Activated CD8-positive, alpha-beta memory T cell treated with anti-CD3 and anti-CD28 coated beads, Interleukin-2, amount 10 ng/mL, durations not matched to agents 7 days and 5 days (primary cell): ENCODE measurements at regions of chr2 and their contacts with region 1.

Region 1: GRCh38 chr2:11477994-11478393 is 12.0 kb upstream of the E2F6 start:
- DNase-seq: peak; percentile 89
- ATAC-seq: peak; percentile 78
- H3K4me3 Mint-ChIP-seq: no peak overlapping the region
- H3K27ac Mint-ChIP-seq: no peak overlapping the region
- H3K4me1 Mint-ChIP-seq: peaks cover under 1% of the 10 kb centered on the region
- H3K27me3 Mint-ChIP-seq: peaks cover 27% of the 10 kb centered on the region

Region 2: DNA sequence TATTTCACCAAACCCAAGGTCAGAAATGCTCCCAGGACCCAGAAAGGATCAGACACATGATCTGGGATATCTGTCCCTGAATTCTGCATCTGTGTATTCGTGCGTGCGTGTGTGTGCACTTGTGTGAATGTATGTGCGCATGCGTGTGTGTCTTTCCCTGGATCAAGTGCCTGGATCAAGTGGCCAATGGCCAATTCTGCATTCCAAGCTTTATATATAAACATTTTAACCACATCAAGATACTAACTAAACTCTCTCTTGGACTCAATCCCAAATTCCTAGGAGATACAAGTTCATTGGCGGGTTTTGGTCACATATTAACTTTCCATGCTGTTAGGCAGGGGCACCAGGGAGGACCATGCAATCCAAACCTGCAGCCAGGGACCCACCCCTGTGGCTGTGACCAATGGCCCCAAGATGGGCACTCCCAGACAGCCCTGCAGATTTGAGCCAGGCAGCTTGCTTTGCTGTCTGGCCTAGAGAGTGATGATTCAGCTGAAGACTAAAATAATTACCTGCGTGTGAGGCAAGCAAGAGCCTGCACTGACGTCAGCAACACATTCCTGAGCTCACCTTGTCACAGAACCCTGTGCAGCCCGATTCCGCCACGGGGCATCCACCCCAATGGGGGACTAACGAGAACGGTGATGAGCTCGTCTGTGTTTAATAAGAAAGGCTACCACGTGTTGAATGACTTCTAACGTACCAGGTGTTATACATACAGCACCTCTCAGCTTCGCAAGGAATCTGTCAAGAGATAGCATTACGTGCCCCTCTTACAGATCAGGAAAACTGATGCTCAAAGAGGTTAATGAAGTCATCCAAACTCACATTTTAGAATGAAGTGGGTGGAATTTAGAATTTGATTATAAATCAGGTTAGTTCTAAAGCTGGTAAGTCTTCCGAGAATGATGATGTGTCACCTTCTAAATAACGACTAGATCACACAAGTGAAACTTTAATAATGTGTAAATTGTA is 88.2 kb before region 1 on chr2:
- CTCF ChIA-PET with region 1: no interaction called
- DNase-seq: no peak
- ATAC-seq: no peak
- H3K4me3 Mint-ChIP-seq: no peak overlapping the region
- H3K27ac Mint-ChIP-seq: no peak overlapping the region
- H3K4me1 Mint-ChIP-seq: no peaks in the 10 kb centered on the region
- H3K27me3 Mint-ChIP-seq: no peaks in the 10 kb centered on the region

Region 3: GRCh38 chr2:11465497-11466406 is 12.2 kb before region 1 on chr2 and contains the start of gene E2F6:
- CTCF ChIA-PET with region 1: interaction called, 13 read pairs
- DNase-seq: peak; percentile 85
- ATAC-seq: peak; percentile 93
- H3K4me3 Mint-ChIP-seq: peak within 1 kb of the TSS; percentile 93
- H3K27ac Mint-ChIP-seq: peak within 1 kb of the TSS; percentile 82
- H3K4me1 Mint-ChIP-seq: peaks cover 27% of the 10 kb centered on the region
- H3K27me3 Mint-ChIP-seq: no peaks in the 10 kb centered on the region
- total RNA-seq, gene E2F6: 7.5 to 11.8 TPM